Heart left ventricle (tissue), 16 donors: ENCODE measurements at regions of chr22 and their contacts with region 1.

Region 1: DNA sequence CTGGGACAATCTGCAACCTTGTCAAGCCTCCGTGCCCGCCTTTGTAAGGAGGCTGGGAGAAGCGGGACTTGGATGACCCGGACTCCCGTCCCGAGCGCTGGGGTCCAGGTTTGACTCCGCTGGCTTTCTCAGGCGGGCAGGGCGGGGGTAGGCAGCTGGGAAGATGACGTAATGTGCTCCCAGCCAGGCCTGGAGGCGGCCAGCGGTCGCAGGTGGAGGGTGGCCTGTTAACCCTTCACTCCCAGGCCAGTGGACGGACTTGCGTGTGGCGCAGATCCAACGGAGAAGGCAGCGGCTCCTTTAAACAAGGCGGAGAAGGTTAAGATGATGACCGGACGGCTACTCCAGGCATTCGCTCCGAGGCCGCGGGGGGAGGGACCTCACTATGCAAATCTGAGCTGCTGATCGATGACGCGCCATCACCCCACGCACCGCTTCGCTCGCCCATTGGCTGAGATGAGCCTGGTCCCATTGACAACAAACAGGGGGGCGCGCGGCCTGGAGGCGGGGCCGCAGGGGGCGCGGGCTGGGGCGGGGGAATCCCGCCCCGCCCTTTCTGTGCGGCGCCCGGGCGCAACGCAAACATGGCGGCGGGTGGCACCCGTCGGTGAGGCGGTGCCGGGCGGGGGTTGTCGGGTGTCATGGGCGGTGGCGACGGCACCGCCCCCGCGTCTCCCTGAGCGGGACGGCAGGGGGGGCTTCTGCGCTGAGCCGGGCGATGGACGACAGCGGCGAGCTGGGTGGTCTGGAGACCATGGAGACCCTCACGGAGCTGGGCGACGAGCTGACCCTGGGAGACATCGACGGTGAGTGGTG is at the start of gene SREBF2:
- DNase-seq: peak; percentile 100
- ATAC-seq: peak; percentile 97 to 99 (median 98)
- H3K4me3 ChIP-seq: peak within 1 kb of the TSS; percentile 76 to 99 (median 96)
- H3K27ac ChIP-seq: peak within 1 kb of the TSS; percentile 90 to 99 (median 94)
- H3K4me1 ChIP-seq: peaks cover 0 to 38% (median 13%) of the 10 kb centered on the region in 12 donors
- H3K27me3 ChIP-seq: no peaks in the 10 kb centered on the region
- CTCF ChIP-seq: peak in 3 of 12 donors; percentile 8 to 21 (median 17)
- POLR2A ChIP-seq: peak in 1 of 2 donors; percentile 74
- total RNA-seq, gene SREBF2: 49.1 to 109 (median 73.0) TPM

Region 2: GRCh38 chr22:41217553-41218157 is 615.1 kb before region 1 on chr22:
- intact Hi-C with region 1: no loop called
- DNase-seq: peak; percentile 79 to 88 (median 81)
- ATAC-seq: peak; percentile 82 to 95 (median 94)
- H3K4me3 ChIP-seq: peak overlapping the region in 10 of 12 donors; percentile 12 to 54 (median 37)
- H3K27ac ChIP-seq: peak overlapping the region; percentile 25 to 93 (median 85)
- H3K4me1 ChIP-seq: peaks cover 0 to 32% (median 23%) of the 10 kb centered on the region in 12 donors
- H3K27me3 ChIP-seq: no peaks in the 10 kb centered on the region
- CTCF ChIP-seq: no peak
- POLR2A ChIP-seq: peak in 1 of 2 donors; percentile 36

Region 3: DNA sequence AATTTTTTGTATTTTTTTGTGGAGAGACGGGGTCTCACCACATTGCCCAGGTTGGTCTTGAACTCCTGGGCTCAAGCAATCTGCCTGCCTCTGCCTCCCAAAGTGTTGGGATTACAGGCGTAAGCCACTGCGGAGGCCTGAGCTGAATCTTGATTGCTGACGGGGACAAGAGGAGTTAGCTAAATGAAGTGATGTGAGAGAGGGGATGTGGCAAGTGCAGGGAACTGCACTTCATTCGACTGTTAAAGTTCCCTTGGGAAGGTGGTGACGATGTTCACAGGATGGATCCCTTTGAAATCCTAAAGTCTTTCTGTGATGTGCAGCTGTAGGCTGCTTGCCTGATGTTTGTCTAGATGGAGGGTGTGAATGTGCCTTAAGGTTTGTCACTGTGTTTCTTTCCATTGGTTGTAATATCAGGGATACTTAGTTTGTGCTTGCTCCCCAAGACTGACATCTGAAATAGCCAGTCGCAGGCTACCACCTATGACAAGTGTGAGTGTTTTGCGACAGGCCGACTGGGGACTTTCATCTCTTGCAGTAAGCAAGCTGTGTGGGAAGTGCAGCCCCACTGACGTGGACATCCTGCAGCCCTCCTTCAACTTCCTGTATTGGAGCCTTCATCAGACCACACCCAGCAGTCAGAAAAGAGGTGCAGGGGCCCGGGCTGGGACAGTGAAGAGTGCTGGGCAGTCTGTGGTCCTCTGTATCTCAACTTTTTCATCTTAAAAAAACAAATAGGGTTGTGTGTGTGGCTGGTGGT is 51.8 kb before region 1 on chr22:
- intact Hi-C with region 1: no loop called
- DNase-seq: peak; percentile 53 to 80 (median 70)
- ATAC-seq: peak; percentile 37 to 87 (median 82)
- H3K4me3 ChIP-seq: peak overlapping the region in 5 of 12 donors; percentile 0 to 44 (median 21)
- H3K27ac ChIP-seq: peak overlapping the region in 1 of 12 donors; percentile 82
- H3K4me1 ChIP-seq: peaks cover 0 to 28% (median 0%) of the 10 kb centered on the region in 12 donors
- H3K27me3 ChIP-seq: no peaks in the 10 kb centered on the region
- CTCF ChIP-seq: no peak
- POLR2A ChIP-seq: no peak

Region 4: GRCh38 chr22:41800348-41801146 is 32.2 kb before region 1 on chr22 and contains the start of gene CCDC134:
- intact Hi-C with region 1: loop called in 3 of 10 experiments (anchors 1 to 2 kb)
- DNase-seq: peak; percentile 92 to 96 (median 94)
- ATAC-seq: peak; percentile 96 to 99 (median 99)
- H3K4me3 ChIP-seq: peak within 1 kb of the TSS; percentile 61 to 98 (median 85)
- H3K27ac ChIP-seq: peak within 1 kb of the TSS; percentile 56 to 96 (median 90)
- H3K4me1 ChIP-seq: peaks cover 0 to 22% (median 17%) of the 10 kb centered on the region in 12 donors
- H3K27me3 ChIP-seq: no peaks in the 10 kb centered on the region
- CTCF ChIP-seq: peak in 1 of 12 donors; percentile 14
- POLR2A ChIP-seq: peak in 1 of 2 donors; percentile 86
- total RNA-seq, gene CCDC134: 2.3 to 10.2 (median 3.5) TPM

Region 5: DNA sequence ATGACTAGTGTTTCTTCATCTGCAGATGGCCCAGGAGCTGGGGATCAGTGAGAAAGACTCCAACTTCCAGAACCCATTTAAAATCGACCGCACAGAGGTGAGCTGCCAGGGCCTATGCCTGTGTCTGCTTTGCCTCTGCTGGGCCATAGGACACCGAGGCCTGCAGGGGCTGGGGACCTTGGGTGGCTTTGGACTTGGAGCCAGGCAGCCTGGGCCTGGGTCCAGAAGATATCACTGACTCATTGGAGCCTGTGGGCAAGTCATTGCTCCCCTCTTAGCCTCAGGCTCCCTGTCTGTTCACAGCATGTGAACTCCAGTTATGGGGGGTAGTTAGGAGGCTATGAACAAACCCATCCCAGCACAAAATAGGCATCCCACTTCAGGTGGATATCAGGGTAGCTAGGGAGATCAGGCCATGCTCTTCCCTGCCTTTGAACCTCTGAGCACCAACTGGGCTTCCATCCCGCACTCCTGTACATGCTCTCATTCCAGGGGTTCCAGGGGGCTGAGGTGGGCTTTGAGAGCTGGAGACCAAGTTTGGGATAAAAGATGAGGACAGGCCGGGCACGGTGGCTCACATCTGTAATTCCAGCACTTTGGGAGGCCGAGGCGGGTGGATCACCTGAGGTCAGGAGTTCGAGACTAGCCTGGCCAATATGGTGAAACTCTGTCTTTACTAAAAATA is 18.9 kb before region 1 on chr22:
- intact Hi-C with region 1: no loop called
- DNase-seq: no peak
- ATAC-seq: no peak
- H3K4me3 ChIP-seq: no peak overlapping the region
- H3K27ac ChIP-seq: no peak overlapping the region
- H3K4me1 ChIP-seq: no peaks in the 10 kb centered on the region
- H3K27me3 ChIP-seq: no peaks in the 10 kb centered on the region
- CTCF ChIP-seq: no peak
- POLR2A ChIP-seq: no peak

Region 6: GRCh38 chr22:41899992-41900651 is 67.4 kb after region 1 on chr22:
- intact Hi-C with region 1: loop called in 2 of 10 experiments (anchors 5 to 10 kb)
- DNase-seq: peak in 3 of 5 donors; percentile 52 to 76 (median 69)
- ATAC-seq: peak; percentile 4 to 45 (median 38)
- H3K4me3 ChIP-seq: no peak overlapping the region
- H3K27ac ChIP-seq: peak overlapping the region in 9 of 12 donors; percentile 9 to 90 (median 71)
- H3K4me1 ChIP-seq: peaks cover 0 to 44% (median 14%) of the 10 kb centered on the region in 12 donors
- H3K27me3 ChIP-seq: no peaks in the 10 kb centered on the region
- CTCF ChIP-seq: no peak
- POLR2A ChIP-seq: no peak

Region 7: DNA sequence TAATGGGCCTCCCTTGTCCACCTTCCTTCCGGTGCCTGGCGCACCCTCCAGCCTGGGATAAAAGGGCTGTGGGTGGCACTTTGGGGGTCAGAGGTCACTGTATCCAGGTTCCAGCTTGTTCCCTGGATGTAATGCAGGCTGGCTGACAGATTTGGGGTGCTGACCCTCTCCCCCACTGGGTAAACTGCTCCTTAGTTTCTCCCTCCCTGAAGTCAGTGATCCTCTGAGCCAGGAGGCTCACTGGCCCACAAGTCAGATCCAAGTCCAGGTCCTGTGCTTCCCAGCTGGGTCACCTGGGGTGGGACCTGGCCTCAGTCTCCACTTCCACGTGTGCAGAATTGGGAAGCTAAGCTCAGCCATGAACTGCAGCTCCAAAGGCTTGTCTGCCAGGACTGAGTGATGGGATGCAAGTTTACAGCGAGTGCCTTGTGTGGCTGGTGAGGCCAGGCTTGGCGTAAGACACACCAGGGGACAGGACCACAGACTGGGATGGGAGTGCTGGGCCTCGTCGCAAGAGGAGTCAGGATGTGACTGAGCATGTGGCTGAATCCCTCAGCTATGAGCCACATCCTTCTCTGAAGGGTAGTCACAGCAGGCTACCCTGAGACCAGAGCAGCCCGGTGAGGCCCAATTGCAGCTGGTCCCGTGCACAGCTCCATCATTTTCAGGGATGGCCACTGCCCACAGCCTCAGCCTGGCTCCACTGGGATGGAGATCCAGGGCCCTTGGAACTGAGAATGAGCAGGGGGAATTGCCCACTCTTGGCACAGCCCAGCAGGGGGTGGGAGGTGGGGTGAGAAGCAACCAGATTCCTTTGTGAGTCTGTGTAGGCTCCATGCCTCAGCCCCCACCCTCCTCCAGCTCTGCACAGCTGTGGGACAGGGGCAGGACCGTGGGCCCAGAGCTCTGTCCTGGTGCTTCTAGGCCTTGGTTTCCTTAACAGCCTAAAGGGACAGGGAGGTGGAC is 75.0 kb after region 1 on chr22:
- intact Hi-C with region 1: loop called in 1 of 10 experiments (anchors 5 kb)
- DNase-seq: no peak
- ATAC-seq: no peak
- H3K4me3 ChIP-seq: no peak overlapping the region
- H3K27ac ChIP-seq: peak overlapping the region in 1 of 12 donors; percentile 25
- H3K4me1 ChIP-seq: peaks cover 0 to 46% (median 23%) of the 10 kb centered on the region in 12 donors
- H3K27me3 ChIP-seq: peaks cover 1 to 33% (median 17%) of the 10 kb centered on the region in 9 donors
- CTCF ChIP-seq: no peak
- POLR2A ChIP-seq: no peak

Region 8: GRCh38 chr22:42079319-42080251 is 246.8 kb after region 1 on chr22 and contains the start of gene SMDT1:
- intact Hi-C with region 1: loop called in 1 of 10 experiments (anchors 10 kb)
- DNase-seq: peak; percentile 100
- ATAC-seq: peak; percentile 91 to 95 (median 93)
- H3K4me3 ChIP-seq: peak within 1 kb of the TSS; percentile 43 to 82 (median 70)
- H3K27ac ChIP-seq: peak within 1 kb of the TSS; percentile 95 to 99 (median 98)
- H3K4me1 ChIP-seq: peaks cover 2 to 57% (median 33%) of the 10 kb centered on the region in 12 donors
- H3K27me3 ChIP-seq: no peaks in the 10 kb centered on the region
- CTCF ChIP-seq: no peak
- POLR2A ChIP-seq: peak; percentile 52 to 96
- total RNA-seq, gene SMDT1: 15.3 to 179 (median 115) TPM